RWPE1 (cell line): ENCODE measurements at regions of chr9 and their contacts with region 1.

Region 1: DNA sequence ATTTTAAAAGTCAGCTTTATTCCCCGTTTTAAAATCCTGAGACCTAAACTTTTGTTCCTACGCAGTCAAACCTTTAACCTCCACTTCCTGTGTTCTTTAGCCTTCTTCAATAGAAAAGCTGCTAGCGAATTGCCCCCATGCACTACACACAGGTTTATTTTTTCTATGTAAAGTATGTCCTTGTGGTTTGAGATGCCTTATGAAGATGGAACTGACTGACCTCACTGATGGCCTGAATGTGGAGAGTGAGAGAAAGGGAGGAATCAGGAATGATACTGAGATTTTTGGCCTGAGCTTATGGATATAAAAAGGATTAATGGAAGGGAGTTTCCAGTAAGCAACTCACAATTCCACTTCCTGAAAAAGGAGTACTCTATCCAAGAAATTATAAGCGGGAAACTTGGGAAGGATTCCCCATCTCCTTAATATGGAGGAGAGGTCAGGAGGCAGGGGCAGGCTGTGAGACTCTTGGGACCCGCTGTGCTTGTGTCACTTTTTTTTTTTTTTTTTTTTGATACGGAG is 89.5 kb downstream of the UGCG start:
- DNase-seq: no peak
- H3K27ac ChIP-seq: no peak overlapping the region
- CTCF ChIP-seq: no peak

Region 2: DNA sequence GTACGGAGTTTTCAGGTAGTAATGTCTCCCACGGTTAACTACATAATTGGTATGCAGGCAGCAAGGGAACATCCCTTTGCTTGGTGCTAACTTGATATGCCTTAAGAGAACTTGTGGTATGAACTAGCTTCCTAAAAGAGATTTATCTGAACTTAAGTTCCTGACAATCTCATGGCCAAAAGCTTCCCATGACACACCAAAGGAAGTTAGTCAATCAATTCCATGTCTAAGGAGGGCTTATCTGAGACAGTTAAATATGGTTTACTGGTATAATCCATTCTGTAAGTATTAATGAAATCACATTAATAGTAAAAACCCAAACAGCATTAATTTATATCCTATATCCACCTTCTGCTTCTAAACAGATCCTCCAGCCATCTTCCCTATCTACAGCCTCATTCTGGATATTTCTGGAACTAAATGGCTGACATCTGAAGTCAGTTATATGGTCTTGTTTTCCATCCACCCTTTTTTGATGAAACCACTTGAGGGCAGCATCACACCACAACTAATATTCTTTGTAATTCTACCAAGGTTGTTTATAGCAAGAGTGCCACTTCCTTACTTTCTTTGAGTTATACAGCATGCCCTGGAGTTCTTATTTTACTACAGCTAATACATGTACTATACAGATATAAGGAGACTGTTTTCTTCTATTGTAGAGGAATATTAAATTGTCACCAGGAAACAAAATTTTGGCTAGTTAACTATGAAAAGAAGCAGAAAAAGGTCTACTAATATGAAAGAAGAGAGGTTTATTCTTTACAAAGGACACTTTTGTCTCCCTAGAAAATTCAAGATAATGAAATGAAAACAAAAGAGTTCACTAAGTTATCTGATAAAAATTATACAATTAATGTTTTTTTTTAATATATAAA is 226.1 kb before region 1 on chr9:
- CTCF ChIA-PET with region 1: interaction called, 5 read pairs
- POLR2A ChIA-PET with region 1: interaction called, 11 read pairs
- DNase-seq: peak; percentile 71
- H3K27ac ChIP-seq: no peak overlapping the region
- CTCF ChIP-seq: peak; percentile 91